ENCODE measurements at regions of chr14 and their contacts with region 1.

Region 1: GRCh38 chr14:55026793-55027561 is at the starts of genes SOCS4 and WDHD1:
- DNase-seq: peak; percentile 95

Region 2: DNA sequence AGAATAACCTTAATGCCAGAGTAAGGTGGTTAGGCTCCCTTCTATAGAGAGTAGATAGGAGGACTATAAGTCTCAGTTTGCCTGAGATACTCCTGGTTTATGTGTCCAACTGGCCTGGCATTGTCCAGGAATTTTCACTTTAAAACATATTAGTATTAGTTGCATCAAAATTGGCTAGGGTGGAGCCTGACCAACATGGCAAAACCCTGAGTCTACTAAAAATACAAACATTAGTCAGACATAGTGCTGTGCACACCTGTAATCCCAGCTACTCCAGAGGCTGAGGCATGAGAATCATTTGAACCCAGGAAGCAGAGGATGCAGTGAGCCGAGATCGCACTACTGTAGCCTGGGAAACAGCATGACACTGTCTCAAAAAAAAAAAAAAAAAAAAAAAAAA is 12.0 kb before region 1 on chr14:
- CTCF ChIA-PET with region 1: interaction called, 4 read pairs
- POLR2A ChIA-PET with region 1: interaction called, 37 read pairs
- DNase-seq: no peak

Region 3: GRCh38 chr14:55043528-55043927 is 16.6 kb after region 1 on chr14:
- CTCF ChIA-PET with region 1: interaction called, 3 read pairs
- POLR2A ChIA-PET with region 1: interaction called, 12 read pairs
- DNase-seq: no peak

Region 4: DNA sequence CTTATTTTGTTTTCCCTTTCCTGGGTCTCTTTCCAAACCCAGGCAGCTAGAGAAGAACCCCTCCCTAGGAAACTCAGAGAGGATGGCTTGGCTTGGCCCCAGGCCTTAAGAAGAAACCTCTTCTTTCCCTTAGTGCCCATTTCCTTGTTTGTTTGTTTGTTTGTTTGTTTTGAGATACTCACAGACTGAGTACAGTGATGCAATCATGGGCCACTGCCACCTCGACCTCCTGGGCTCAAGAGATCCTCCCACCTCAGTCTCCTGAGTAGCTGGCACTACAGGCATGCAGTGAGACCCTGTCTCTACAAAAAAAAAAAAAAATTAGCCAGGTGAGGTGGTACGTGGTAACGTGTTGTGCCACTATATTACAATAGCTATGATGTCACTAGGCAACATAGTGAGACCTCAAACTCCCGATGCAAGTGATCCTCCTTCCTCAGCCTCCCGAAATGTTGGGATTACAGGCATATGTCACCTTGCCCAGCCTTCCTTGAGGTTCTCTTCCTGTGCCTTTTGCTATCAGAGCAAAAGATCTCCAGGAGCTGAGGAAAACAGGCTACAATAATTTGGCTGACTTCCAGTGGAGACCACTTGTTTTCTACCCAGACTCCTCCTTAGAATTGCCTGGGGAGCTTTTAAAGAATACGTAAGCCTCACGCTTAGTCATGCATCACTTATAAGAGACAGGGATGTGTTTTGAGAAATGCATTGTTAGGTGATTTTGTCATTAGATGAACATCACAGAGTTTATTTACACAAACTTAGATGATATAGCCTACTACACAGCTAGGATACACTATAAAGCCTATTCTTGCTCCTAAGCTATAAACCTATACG is 67.6 kb after region 1 on chr14:
- CTCF ChIA-PET with region 1: no interaction called
- POLR2A ChIA-PET with region 1: interaction called, 10 read pairs
- DNase-seq: no peak

Region 5: DNA sequence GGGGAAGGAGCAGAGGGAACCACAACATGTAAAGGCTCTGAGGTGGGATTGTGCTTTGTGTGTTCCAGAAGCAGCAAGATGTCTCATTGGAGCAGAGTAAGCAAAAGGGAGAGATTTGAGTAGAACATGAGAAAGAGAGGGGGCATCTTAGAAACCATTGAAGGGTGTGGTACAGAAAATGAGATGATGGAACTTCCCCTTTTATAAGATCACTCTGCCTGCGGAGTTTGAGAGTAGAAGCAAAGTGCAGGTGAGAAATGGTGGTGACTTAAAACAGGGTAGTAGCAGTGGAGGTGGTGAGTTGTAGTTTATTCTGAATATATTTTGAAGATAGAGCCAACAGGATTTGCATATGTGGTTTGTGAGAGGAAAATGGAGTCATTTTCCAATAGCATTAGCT is 300.2 kb after region 1 on chr14:
- CTCF ChIA-PET with region 1: no interaction called
- POLR2A ChIA-PET with region 1: no interaction called
- DNase-seq: no peak

Measured in HEK293T (cell line).